Prostate gland (tissue), 2 donors: ENCODE measurements at regions of chr5 and their contacts with region 1.

Region 1: DNA sequence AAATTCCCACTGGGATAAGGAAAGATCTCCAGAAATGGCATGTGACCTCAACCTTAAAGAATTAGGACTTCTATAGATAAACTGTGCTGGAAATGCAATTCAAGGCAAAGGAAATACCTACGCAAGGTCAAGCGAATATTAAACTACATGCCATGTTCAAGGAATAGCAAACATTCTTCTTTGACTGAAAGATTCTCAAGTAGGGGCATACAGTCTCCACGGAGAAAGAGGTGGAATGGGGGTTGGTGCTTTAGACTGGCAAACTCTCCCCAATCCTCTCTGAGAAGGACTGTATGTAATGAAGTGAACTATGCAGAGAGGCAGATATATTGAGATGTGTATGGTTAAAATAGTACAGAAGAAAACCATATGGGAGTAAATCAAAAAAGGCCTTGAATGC is 6.1 kb downstream of the RICTOR start:
- DNase-seq: no peak
- H3K4me3 ChIP-seq: no peak overlapping the region
- H3K27ac ChIP-seq: no peak overlapping the region
- H3K4me1 ChIP-seq: peaks cover 4% of the 10 kb centered on the region
- H3K27me3 ChIP-seq: no peaks in the 10 kb centered on the region
- CTCF ChIP-seq: no peak
- POLR2A ChIP-seq: no peak

Region 2: GRCh38 chr5:39015743-39016586 is 52.1 kb before region 1 on chr5:
- intact Hi-C with region 1: loop called (anchors 5 kb)
- DNase-seq: no peak
- H3K4me3 ChIP-seq: no peak overlapping the region
- H3K27ac ChIP-seq: no peak overlapping the region
- H3K4me1 ChIP-seq: no peaks in the 10 kb centered on the region
- H3K27me3 ChIP-seq: no peaks in the 10 kb centered on the region
- CTCF ChIP-seq: no peak
- POLR2A ChIP-seq: no peak